ENCODE measurements at regions of chr18 and their contacts with region 1.

Region 1: GRCh38 chr18:21968338-21968737 is 201.1 kb upstream of the GATA6 start:
- DNase-seq: no peak
- H3K4me3 ChIP-seq: no peak overlapping the region
- H3K27ac ChIP-seq: no peak overlapping the region
- H3K4me1 ChIP-seq: no peaks in the 10 kb centered on the region
- H3K27me3 ChIP-seq: no peaks in the 10 kb centered on the region
- CTCF ChIP-seq: no peak

Region 2: GRCh38 chr18:21004726-21005125 is 963.6 kb before region 1 on chr18:
- CTCF ChIA-PET with region 1: interaction called, 12 read pairs
- POLR2A ChIA-PET with region 1: no interaction called
- intact Hi-C with region 1: no loop called
- DNase-seq: no peak
- H3K4me3 ChIP-seq: no peak overlapping the region
- H3K27ac ChIP-seq: no peak overlapping the region
- H3K4me1 ChIP-seq: no peaks in the 10 kb centered on the region
- H3K27me3 ChIP-seq: no peaks in the 10 kb centered on the region
- CTCF ChIP-seq: no peak

Region 3: DNA sequence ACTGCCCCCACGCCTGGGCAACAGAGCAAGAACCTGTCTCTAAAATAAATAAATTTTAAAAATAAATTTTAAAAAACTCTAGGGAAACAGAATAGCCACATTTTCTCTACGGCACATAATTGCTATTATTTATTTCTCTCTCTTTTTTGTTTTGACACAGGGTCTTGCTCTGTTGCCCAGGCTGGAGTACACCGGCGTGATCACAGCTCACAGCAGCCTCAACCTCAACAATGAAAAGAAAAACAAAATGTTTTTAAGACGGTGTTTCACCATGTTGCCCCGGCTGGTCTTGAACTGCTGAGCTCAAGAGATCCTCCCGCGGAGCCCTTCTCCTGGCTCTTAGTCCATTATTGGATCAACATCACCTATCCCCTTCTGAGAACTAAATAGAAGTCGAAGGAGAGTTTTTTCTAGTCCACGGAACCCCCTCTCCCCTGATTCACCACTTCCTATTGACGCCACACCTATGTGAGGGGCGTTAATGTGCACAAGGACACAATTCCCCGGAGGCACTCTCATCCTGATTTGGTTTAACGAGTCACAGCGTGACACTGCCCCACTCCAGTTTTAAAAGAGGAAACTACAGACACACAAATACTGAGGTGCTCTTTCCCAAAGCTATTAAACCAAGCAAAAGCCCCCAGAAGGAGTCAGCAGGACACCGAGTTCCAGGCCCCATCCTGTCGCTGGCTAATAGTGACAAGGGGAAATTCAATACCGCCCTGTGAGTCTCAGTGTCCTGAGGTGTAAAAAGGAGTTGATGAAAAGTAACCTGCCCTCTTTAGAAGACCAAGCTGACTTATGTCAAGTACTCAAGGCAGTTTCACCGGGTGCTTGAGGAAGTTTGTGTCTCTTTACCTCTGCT is 1616.9 kb after region 1 on chr18:
- CTCF ChIA-PET with region 1: no interaction called
- POLR2A ChIA-PET with region 1: no interaction called
- intact Hi-C with region 1: no loop called
- DNase-seq: peak; percentile 35 to 70
- H3K4me3 ChIP-seq: peak overlapping the region; percentile 82
- H3K27ac ChIP-seq: peak overlapping the region; percentile 97
- H3K4me1 ChIP-seq: peaks cover 19% of the 10 kb centered on the region
- H3K27me3 ChIP-seq: no peaks in the 10 kb centered on the region
- CTCF ChIP-seq: no peak